ENCODE measurements at regions of chr22 and their contacts with region 1.

Region 1: DNA sequence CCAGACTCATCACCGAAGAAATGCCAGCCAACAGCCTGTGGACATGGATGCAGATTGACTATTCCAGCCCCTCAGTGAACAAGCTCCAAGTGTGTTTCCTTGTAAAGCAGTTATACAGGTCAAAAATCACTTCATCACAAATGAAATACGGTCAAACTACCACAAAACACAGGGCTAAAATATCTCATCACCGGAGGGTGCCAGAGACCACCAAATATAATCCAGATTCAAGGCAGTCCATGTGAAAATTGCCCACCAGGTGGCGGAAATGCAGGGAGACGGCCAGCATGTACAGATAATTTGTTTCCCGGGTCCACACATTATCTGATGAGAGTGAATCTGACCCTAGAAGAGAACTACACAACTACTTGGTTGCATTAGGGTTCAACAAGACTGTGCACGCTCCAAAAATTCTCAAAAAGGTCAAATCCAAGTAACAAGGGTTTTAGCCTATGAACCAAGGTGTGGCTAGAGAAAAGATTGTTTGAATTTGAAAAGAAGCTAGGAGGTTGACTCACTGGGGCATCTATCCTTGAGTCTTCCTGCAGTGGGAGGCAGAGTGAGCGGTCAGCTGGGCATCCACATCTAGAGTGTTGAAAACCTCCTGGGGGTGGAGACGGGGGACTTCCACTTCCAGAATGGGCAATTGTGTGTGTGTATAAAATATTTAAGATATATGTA is 71.7 kb downstream of the IGLL5 start:
- DNase-seq: peak; percentile 81
- H3K4me3 ChIP-seq: no peak overlapping the region
- H3K27ac ChIP-seq: no peak overlapping the region
- H3K4me1 ChIP-seq: no peaks in the 10 kb centered on the region
- H3K27me3 ChIP-seq: peaks cover 5% of the 10 kb centered on the region
- CTCF ChIP-seq: peak; percentile 94

Region 2: DNA sequence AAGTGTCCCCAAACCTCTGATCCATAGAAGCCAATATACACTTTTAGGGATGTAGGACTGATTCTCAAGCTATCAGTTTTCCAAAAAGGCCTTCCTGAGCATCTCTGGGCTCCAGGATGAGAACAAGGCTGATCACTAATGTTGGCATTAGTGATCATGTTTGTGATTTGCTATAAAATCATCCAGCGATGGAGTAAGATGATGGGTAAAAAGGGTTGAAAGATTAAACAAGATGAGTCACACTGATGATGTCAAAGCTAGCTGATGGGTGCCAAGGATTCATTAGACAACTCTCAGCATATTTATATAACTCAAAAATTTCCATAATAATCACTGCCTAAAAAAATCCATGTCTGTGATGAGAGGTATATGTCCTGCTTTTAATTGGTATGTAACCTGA is 493.5 kb before region 1 on chr22:
- CTCF ChIA-PET with region 1: no interaction called
- POLR2A ChIA-PET with region 1: no interaction called
- intact Hi-C with region 1: loop called (anchors 5 kb)
- DNase-seq: no peak
- H3K4me3 ChIP-seq: no peak overlapping the region
- H3K27ac ChIP-seq: no peak overlapping the region
- H3K4me1 ChIP-seq: no peaks in the 10 kb centered on the region
- H3K27me3 ChIP-seq: no peaks in the 10 kb centered on the region
- CTCF ChIP-seq: no peak

Region 3: DNA sequence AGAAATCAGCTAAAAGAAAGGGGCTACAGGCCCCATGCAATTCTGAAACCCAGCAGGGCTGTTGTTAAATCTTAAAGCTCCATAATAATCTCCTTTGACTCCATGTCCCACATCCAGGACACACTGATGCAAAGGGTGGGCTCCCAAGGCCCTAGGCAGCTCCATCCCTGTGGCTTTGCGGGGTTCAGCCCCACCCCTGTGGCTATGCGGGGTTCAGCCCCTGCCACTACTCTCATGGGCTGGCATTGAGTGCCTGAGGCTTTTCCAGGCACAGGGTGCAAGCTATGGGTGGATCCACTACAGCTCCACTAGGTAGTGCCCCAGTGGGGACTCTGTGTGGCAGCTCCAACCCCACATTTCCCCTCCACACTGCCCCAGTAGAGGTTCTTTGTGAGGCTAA is 430.5 kb before region 1 on chr22:
- CTCF ChIA-PET with region 1: no interaction called
- POLR2A ChIA-PET with region 1: no interaction called
- intact Hi-C with region 1: no loop called
- DNase-seq: no peak
- H3K4me3 ChIP-seq: no peak overlapping the region
- H3K27ac ChIP-seq: no peak overlapping the region
- H3K4me1 ChIP-seq: no peaks in the 10 kb centered on the region
- H3K27me3 ChIP-seq: no peaks in the 10 kb centered on the region
- CTCF ChIP-seq: no peak

Region 4: DNA sequence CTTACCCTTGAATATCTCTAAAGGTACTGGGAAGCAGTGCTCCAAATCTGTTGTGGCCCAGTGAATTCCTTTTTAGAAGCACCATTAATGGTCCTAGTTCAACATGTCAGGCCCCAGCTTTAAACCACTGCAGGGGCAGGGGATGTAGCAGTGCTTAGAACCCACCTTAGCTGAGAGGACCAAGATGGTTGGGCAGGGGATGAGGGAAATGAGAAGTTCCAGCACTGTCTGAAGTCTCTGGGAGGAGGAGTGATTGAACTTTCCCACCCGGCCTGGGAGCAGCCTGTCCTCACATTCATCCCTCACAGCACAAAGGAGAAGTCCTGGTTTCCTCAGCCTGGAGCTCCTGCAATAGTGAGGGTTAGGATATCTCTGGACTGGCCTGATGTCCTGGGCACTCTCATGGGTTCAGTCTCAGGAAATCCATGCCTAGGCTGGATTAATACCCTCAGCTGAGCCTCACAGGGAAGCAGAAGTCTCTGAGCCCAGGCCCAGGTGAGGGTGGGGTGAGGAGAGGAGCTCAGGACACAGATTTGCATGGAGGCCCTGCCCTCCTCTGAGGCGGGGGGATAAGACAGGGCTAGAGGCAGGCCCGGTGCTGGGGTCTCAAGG is 371.6 kb before region 1 on chr22:
- CTCF ChIA-PET with region 1: no interaction called
- POLR2A ChIA-PET with region 1: no interaction called
- intact Hi-C with region 1: loop called (anchors 10 kb)
- DNase-seq: no peak
- H3K4me3 ChIP-seq: no peak overlapping the region
- H3K27ac ChIP-seq: no peak overlapping the region
- H3K4me1 ChIP-seq: no peaks in the 10 kb centered on the region
- H3K27me3 ChIP-seq: peaks cover 11% of the 10 kb centered on the region
- CTCF ChIP-seq: no peak

Region 5: DNA sequence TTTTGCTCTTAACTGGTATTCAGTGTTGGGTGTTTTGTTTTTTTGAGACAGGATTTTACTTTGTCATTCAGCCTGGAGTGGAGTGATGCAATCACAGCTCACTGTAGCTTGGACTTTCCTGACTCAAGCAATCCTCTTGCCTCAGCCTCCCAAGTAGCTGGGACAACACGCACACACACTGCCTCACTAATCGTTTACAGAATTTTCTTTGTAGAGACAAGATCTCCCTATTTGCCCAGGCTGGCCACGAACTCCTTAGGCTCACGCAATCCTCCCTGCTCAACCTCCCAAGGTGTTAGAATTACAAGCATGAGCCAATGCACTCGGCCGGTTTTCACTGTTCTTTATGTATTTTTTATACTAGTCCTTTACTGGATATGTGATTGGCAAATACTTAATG is 122.7 kb before region 1 on chr22:
- CTCF ChIA-PET with region 1: no interaction called
- POLR2A ChIA-PET with region 1: no interaction called
- intact Hi-C with region 1: no loop called
- DNase-seq: no peak
- H3K4me3 ChIP-seq: no peak overlapping the region
- H3K27ac ChIP-seq: no peak overlapping the region
- H3K4me1 ChIP-seq: no peaks in the 10 kb centered on the region
- H3K27me3 ChIP-seq: peaks cover 15% of the 10 kb centered on the region
- CTCF ChIP-seq: no peak

Region 6: GRCh38 chr22:22848364-22848866 is 110.9 kb before region 1 on chr22:
- CTCF ChIA-PET with region 1: interaction called, 6 read pairs
- POLR2A ChIA-PET with region 1: no interaction called
- intact Hi-C with region 1: loop called (anchors 5 kb)
- DNase-seq: peak; percentile 56
- H3K4me3 ChIP-seq: no peak overlapping the region
- H3K27ac ChIP-seq: no peak overlapping the region
- H3K4me1 ChIP-seq: no peaks in the 10 kb centered on the region
- H3K27me3 ChIP-seq: peaks cover 57% of the 10 kb centered on the region
- CTCF ChIP-seq: peak; percentile 95

Region 7: DNA sequence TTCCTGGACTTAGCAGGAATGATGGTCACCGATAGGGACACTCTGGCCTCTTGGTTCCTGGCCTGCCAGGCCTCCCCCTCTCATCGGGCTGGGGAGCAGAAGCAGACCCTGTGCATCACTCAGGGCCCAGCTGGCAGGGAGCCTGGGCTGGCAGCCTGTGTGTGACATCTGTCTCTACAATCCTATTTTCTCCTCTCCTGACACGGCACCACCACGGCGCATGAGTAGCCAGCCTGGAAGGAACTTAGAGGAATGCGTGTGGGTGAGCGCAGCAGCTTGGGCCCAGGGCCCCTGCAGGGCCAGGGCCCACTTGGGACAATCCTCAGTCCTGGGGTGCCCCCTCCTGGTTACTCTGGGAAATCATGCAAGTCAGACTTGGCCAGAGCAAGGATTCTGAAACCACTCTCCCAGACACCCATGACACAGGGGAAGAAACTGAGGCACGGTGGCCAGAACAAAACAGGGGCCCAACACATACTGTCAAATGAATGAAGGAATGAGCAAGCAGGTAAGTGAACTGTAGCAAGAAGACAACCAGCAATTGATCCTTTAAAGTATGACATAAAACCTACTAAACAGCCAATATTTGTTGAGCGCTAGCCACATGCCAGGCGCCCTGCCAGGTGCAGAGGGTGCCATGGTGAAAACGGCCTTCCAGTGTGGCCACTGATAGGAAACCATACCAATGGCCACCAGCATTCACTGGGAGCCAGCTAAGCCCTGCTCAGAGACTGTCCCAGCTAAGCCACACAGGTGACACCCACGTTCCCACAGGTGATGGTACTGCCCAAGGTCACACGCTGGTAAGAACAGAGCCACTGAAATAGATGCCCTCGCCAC is 169.2 kb after region 1 on chr22:
- CTCF ChIA-PET with region 1: interaction called, 38 read pairs
- POLR2A ChIA-PET with region 1: no interaction called
- intact Hi-C with region 1: loop called (anchors 1 kb)
- DNase-seq: peak; percentile 82
- H3K4me3 ChIP-seq: no peak overlapping the region
- H3K27ac ChIP-seq: no peak overlapping the region
- H3K4me1 ChIP-seq: no peaks in the 10 kb centered on the region
- H3K27me3 ChIP-seq: no peaks in the 10 kb centered on the region
- CTCF ChIP-seq: peak; percentile 84

Region 8: DNA sequence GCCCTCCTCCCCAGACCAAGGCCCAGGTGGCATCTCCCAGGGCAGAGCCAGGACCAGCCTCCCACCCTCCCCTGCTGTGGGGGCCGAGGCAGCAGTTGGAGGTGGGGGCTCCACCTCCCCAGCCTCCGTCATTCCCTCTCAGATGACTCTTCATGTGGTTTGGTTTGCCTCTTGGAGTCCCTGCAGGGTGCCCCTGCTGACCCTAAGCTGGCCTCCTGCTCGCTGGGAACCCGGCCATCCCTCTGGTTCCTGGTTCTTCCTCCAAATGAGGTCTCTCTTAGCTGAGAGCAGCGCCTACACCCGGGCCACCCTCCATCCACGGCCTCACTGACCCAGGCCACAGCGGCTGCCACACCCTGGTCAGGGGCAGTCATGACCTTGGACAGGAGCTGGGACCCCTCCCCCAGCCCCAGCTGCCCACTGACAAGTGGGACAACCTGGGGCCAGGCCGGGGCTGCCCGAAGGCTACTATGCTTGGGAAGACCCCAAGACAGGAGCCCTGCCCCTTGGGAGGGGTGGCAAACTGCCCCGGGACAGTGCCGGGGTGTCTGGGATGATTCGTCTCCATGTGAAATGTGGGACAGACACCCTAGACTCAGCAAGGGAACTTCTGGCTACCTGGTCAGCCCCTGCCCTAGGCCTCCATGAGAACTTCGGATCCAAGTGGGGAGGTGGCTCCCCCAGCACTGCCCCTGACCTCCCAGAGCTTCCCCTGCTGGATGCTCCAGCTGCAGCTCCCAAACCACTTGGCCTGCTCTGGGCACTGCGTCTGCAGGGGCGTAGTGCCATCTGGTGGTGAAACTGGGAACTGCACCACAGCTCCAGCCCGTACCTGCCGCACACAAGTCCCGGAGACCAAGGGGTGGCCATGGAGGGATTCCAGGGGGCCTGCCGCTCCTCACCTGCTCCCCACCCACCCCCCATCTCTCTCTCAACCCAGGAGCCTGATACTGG is 426.3 kb after region 1 on chr22:
- CTCF ChIA-PET with region 1: interaction called, 10 read pairs
- POLR2A ChIA-PET with region 1: no interaction called
- intact Hi-C with region 1: loop called (anchors 5 kb)
- DNase-seq: peak; percentile 81
- H3K4me3 ChIP-seq: no peak overlapping the region
- H3K27ac ChIP-seq: no peak overlapping the region
- H3K4me1 ChIP-seq: no peaks in the 10 kb centered on the region
- H3K27me3 ChIP-seq: no peaks in the 10 kb centered on the region
- CTCF ChIP-seq: peak; percentile 97